Astrocyte of the cerebellum (primary cell): ENCODE measurements at regions of chr2 and their contacts with region 1.

Region 1: GRCh38 chr2:15449556-15450236 is 111.4 kb downstream of the NBAS start:
- DNase-seq: no peak
- H3K4me3 ChIP-seq: no peak overlapping the region
- CTCF ChIP-seq: no peak

Region 2: GRCh38 chr2:15399241-15399640 is 50.5 kb before region 1 on chr2:
- in situ Hi-C with region 1: loop called (anchors 5 kb)
- DNase-seq: no peak
- H3K4me3 ChIP-seq: no peak overlapping the region
- CTCF ChIP-seq: no peak